Heart right ventricle (tissue), 16 donors: ENCODE measurements at regions of chr5 and their contacts with region 1.

Region 1: DNA sequence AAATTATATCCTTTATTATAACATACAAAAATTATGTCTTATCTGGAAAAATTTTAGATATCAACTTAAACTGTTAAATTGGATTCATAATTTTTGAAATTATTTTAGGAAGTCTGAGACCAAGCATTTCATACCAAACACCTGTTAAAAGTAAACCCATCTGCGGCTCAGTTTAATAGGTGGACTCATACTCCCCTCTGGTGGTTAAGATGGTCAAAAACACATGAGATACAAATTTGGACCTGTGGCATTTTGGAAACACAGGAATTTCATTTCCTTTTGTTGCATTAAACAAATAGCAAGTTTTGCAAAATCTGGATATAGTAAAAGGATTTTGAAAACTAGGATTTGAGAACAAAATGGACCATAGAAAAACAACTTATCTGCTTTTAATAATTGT is 53.7 kb downstream of the RGMB start:
- DNase-seq: no peak
- ATAC-seq: peak in 1 of 8 donors; percentile 52
- H3K4me3 ChIP-seq: no peak overlapping the region
- H3K27ac ChIP-seq: no peak overlapping the region
- H3K4me1 ChIP-seq: no peaks in the 10 kb centered on the region
- H3K27me3 ChIP-seq: no peaks in the 10 kb centered on the region
- CTCF ChIP-seq: peak; percentile 15 to 67 (median 57)

Region 2: GRCh38 chr5:97231025-97231636 is 1596.0 kb before region 1 on chr5:
- intact Hi-C with region 1: loop called in 2 of 10 experiments (anchors 10 kb)
- DNase-seq: peak in 1 of 2 donors; percentile 56
- ATAC-seq: peak in 7 of 8 donors; percentile 78 to 94 (median 83)
- H3K4me3 ChIP-seq: no peak overlapping the region
- H3K27ac ChIP-seq: peak overlapping the region in 2 of 10 donors; percentile 12 to 31
- H3K4me1 ChIP-seq: peaks cover 0 to 20% (median 3%) of the 10 kb centered on the region in 9 donors
- H3K27me3 ChIP-seq: no peaks in the 10 kb centered on the region
- CTCF ChIP-seq: peak; percentile 53 to 89 (median 82)

Region 3: DNA sequence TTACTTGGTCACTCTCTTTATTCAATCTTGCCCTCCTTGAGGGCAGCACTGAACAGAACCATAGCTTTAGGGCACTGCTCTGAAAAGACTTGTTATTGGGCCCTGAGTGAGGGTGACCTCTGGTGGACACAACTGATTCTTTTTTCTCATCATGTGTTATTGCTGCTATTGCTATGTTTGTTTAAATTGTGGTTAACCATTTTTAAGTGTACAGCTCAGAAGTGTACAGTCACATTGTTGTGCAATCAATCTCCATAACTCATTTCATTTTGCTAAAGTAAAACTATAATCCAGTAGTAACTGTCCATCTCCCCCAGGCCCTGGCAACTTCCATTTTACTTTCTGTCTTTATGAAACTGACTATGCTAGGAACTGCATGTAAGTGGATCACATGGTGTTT is 1293.0 kb before region 1 on chr5:
- intact Hi-C with region 1: loop called in 1 of 10 experiments (anchors 10 kb)
- DNase-seq: peak in 1 of 2 donors; percentile 24
- ATAC-seq: peak in 6 of 8 donors; percentile 38 to 74 (median 69)
- H3K4me3 ChIP-seq: no peak overlapping the region
- H3K27ac ChIP-seq: no peak overlapping the region
- H3K4me1 ChIP-seq: peaks cover 0 to 3% (median 0%) of the 10 kb centered on the region in 9 donors
- H3K27me3 ChIP-seq: no peaks in the 10 kb centered on the region
- CTCF ChIP-seq: peak in 8 of 9 donors; percentile 15 to 71 (median 56)

Region 4: GRCh38 chr5:98524773-98525172 is 302.4 kb before region 1 on chr5:
- intact Hi-C with region 1: loop called in 1 of 10 experiments (anchors 5 kb)
- DNase-seq: no peak
- ATAC-seq: no peak
- H3K4me3 ChIP-seq: no peak overlapping the region
- H3K27ac ChIP-seq: no peak overlapping the region
- H3K4me1 ChIP-seq: no peaks in the 10 kb centered on the region
- H3K27me3 ChIP-seq: no peaks in the 10 kb centered on the region
- CTCF ChIP-seq: no peak

Region 5: DNA sequence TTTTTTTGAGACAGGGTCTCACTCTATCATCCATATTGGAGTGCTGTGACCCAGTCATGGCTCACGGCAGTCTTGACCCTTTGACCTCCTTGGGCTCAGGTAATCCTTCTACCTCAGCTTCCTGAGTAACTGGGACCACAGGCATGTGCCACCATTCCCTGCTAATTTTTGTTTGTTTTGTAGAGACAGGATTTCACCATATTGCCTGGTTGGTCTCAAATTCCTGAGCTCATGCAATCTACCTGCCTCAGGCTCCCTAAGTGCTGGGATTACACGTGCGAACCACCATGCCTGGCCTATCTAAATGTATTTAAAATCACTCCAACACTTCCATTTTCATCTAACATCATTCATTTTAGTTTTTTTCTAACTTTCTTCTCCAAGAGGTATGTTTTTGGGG is 292.2 kb after region 1 on chr5:
- intact Hi-C with region 1: no loop called
- DNase-seq: no peak
- ATAC-seq: no peak
- H3K4me3 ChIP-seq: no peak overlapping the region
- H3K27ac ChIP-seq: no peak overlapping the region
- H3K4me1 ChIP-seq: no peaks in the 10 kb centered on the region
- H3K27me3 ChIP-seq: no peaks in the 10 kb centered on the region
- CTCF ChIP-seq: no peak